HCT116 (cell line): ENCODE measurements at regions of chr4 and their contacts with region 1.

Region 1: GRCh38 chr4:119286377-119287002 is 35.4 kb downstream of the FABP2 start:
- DNase-seq: peak; percentile 47
- ATAC-seq: no peak
- H3K4me3 ChIP-seq: no peak overlapping the region
- H3K27ac ChIP-seq: no peak overlapping the region
- H3K4me1 ChIP-seq: no peaks in the 10 kb centered on the region
- H3K27me3 ChIP-seq: no peaks in the 10 kb centered on the region
- CTCF ChIP-seq: peak; percentile 42 to 70 (median 59)
- POLR2A ChIP-seq: no peak
- RAD21 ChIP-seq: peak; percentile 82

Region 2: DNA sequence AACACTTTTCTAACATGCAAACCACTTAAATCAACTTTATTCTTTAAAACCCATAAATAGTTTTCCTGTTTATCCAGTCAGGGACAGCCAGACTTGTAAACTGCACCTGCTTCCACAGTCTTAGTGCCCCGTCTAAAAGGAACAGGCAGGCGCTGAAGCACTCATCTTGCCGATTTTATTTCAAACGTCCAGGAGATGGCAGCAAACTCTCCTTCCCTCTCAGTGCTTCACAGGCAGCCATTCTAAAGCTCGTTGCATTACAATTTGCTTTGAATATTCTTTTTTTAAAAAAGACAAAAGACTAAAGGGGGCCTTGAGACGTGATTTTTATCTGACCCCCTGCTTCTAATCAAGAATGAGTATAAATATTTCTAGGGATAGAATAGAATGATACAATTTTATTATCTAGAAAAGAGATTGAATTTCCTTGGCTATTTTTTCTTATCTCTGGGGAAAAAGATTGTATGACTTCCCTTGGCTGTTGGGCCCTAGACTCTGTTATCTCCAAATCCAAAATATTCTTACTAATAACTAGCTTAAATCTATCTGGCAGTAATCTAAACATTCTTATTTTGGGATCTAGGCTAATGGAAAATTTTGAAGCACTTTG is 244.4 kb before region 1 on chr4:
- CTCF ChIA-PET with region 1: interaction called, 5 read pairs
- POLR2A ChIA-PET with region 1: no interaction called
- RAD21 ChIA-PET with region 1: no interaction called
- intact Hi-C with region 1: loop called (anchors 1 kb)
- DNase-seq: peak; percentile 67
- ATAC-seq: peak; percentile 95
- H3K4me3 ChIP-seq: no peak overlapping the region
- H3K27ac ChIP-seq: no peak overlapping the region
- H3K4me1 ChIP-seq: no peaks in the 10 kb centered on the region
- H3K27me3 ChIP-seq: no peaks in the 10 kb centered on the region
- CTCF ChIP-seq: peak; percentile 61 to 80 (median 72)
- POLR2A ChIP-seq: no peak
- RAD21 ChIP-seq: peak; percentile 88

Region 3: DNA sequence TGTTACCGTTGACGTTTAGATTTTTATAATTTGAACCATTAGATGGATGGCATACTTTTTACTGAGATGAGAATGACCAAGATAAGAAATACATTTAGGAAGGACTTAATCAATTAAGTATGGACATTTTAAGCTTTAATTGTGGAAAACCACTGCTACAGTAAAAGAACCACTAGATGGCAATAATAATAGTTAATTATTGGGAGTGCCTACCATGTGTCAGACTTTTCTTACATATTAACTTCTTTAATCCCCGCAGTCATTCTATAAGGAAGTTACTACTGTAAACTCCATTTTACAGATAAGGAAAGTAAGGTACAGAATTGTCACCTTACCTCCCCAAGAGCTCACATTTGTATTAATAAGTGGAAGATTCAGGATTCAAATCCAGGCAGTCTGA is 199.4 kb before region 1 on chr4:
- CTCF ChIA-PET with region 1: no interaction called
- POLR2A ChIA-PET with region 1: no interaction called
- RAD21 ChIA-PET with region 1: interaction called in 1 of 2 experiments, 3 read pairs
- intact Hi-C with region 1: loop called (anchors 5 kb)
- DNase-seq: no peak
- ATAC-seq: no peak
- H3K4me3 ChIP-seq: no peak overlapping the region
- H3K27ac ChIP-seq: no peak overlapping the region
- H3K4me1 ChIP-seq: no peaks in the 10 kb centered on the region
- H3K27me3 ChIP-seq: no peaks in the 10 kb centered on the region
- CTCF ChIP-seq: peak; percentile 13 to 38 (median 19); a peak in 3 of 6 replicates
- POLR2A ChIP-seq: no peak
- RAD21 ChIP-seq: peak; percentile 57

Region 4: DNA sequence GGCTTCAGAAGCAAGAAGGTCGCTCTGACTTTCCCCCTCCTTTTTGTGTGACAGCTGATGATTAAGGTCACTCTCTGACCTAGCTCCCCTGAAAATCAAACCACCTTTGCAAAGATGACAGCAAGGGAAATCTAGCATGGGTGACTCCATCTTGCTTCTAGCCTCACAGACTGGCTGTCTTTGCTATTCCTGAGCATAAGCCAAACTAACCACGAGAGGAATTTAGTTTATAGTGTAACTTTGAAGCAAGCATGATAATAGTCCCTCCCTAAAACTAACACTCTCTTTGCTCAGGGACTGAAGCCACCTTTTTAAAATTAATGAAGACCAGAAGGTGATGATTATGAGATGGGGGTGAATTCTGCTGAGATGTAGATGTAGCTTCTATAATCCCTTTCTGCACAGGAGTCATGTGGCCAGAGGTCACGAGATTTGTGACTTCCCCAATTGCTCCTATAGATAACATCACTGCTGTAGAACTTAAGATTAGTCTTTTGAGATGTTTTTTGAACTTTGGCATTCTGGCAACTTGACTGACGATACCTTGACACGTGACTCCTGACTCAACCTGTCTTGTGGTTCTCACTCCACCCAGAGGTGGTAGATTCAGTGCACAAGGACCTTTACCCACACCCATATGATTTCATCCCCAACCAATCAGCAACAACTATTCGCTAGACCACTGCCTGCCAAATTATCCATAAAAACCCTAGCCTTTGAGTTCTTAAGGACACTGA is 357.0 kb after region 1 on chr4:
- CTCF ChIA-PET with region 1: no interaction called
- POLR2A ChIA-PET with region 1: no interaction called
- RAD21 ChIA-PET with region 1: no interaction called
- intact Hi-C with region 1: no loop called
- DNase-seq: no peak
- ATAC-seq: no peak
- H3K4me3 ChIP-seq: no peak overlapping the region
- H3K27ac ChIP-seq: no peak overlapping the region
- H3K4me1 ChIP-seq: no peaks in the 10 kb centered on the region
- H3K27me3 ChIP-seq: no peaks in the 10 kb centered on the region
- CTCF ChIP-seq: no peak
- POLR2A ChIP-seq: no peak
- RAD21 ChIP-seq: no peak